Vagina (tissue), 2 donors: ENCODE measurements at regions of chr1 and their contacts with region 1.

Region 1: DNA sequence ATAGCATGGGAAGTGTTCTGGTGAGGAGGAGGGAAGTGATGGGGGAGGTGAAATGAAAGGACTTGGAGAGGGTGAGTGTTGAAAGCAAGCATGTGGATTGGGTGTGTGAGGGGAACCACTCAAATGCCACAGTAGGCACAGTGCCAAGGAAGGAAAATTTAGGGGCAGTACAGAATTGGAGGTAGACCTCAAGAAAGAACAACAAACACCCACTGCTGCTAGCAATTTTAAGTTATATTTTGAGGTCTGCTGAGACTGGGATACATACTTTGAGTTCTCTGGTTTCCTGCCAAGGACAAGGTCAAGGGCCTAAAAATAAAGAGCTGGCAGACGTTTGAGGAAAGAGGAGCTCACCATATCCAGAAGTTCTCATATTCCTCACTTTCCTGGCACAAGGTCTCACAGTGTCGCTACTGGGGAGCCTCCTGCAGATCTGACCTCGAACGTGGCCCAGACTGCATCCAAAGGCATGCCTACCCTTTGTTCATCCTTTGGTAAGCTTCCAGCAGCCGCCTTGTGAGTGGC is 104.0 kb downstream of the BRINP2 start:
- DNase-seq: no peak
- H3K4me3 ChIP-seq: no peak overlapping the region
- H3K27ac ChIP-seq: peak overlapping the region; percentile 28
- H3K4me1 ChIP-seq: peaks cover 21% of the 10 kb centered on the region
- H3K27me3 ChIP-seq: no peaks in the 10 kb centered on the region
- CTCF ChIP-seq: no peak
- POLR2A ChIP-seq: no peak

Region 2: DNA sequence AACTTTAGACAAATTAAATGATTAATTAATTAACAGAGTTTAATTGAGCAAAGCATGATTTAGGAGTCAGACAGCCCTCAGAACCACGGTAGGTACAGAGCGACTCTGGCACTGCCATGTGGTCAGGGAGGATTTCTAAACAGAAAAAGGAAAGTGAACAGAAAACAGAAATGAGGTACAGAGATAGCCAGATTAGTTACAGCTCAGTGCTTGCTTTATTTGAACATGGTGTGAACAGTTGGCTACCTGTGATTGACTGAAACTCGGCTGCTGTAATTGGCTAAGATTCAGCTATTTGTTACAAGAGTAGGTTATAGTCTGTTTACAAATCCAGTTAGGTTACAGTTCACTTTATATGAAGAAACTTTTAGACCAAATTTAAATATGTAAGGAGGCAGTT is 1368.4 kb before region 1 on chr1:
- intact Hi-C with region 1: no loop called
- DNase-seq: no peak
- H3K4me3 ChIP-seq: no peak overlapping the region
- H3K27ac ChIP-seq: no peak overlapping the region
- H3K4me1 ChIP-seq: no peaks in the 10 kb centered on the region
- H3K27me3 ChIP-seq: no peaks in the 10 kb centered on the region
- CTCF ChIP-seq: no peak
- POLR2A ChIP-seq: no peak

Region 3: GRCh38 chr1:177119311-177119710 is 155.4 kb before region 1 on chr1:
- intact Hi-C with region 1: loop called (anchors 10 kb)
- DNase-seq: no peak
- H3K4me3 ChIP-seq: no peak overlapping the region
- H3K27ac ChIP-seq: no peak overlapping the region
- H3K4me1 ChIP-seq: no peaks in the 10 kb centered on the region
- H3K27me3 ChIP-seq: no peaks in the 10 kb centered on the region
- CTCF ChIP-seq: no peak
- POLR2A ChIP-seq: no peak

Region 4: DNA sequence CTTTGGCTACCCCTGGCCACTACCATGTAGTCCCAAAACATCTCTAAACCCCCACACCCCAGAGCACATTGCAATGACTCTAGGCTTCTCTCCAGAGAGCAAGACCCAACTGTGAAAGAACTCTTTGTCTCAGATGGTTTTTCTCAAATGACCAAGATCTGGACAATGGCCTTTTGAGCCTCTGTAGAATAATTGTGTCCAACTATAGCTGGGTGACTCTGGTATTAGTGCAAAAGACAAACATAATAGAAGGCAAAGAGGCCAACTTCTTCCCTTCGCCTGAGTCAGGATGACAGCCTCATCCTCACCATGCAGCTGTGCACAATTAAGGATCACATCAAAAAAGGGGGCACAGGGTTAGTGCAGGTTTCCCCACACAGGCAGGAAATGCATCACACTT is 35.6 kb after region 1 on chr1:
- intact Hi-C with region 1: no loop called
- DNase-seq: no peak
- H3K4me3 ChIP-seq: no peak overlapping the region
- H3K27ac ChIP-seq: no peak overlapping the region
- H3K4me1 ChIP-seq: no peaks in the 10 kb centered on the region
- H3K27me3 ChIP-seq: no peaks in the 10 kb centered on the region
- CTCF ChIP-seq: no peak
- POLR2A ChIP-seq: no peak

Region 5: GRCh38 chr1:177328251-177328650 is 53.5 kb after region 1 on chr1:
- intact Hi-C with region 1: no loop called
- DNase-seq: no peak
- H3K4me3 ChIP-seq: no peak overlapping the region
- H3K27ac ChIP-seq: no peak overlapping the region
- H3K4me1 ChIP-seq: no peaks in the 10 kb centered on the region
- H3K27me3 ChIP-seq: no peaks in the 10 kb centered on the region
- CTCF ChIP-seq: no peak
- POLR2A ChIP-seq: no peak